ENCODE measurements at regions of chr1 and their contacts with region 1.

Region 1: DNA sequence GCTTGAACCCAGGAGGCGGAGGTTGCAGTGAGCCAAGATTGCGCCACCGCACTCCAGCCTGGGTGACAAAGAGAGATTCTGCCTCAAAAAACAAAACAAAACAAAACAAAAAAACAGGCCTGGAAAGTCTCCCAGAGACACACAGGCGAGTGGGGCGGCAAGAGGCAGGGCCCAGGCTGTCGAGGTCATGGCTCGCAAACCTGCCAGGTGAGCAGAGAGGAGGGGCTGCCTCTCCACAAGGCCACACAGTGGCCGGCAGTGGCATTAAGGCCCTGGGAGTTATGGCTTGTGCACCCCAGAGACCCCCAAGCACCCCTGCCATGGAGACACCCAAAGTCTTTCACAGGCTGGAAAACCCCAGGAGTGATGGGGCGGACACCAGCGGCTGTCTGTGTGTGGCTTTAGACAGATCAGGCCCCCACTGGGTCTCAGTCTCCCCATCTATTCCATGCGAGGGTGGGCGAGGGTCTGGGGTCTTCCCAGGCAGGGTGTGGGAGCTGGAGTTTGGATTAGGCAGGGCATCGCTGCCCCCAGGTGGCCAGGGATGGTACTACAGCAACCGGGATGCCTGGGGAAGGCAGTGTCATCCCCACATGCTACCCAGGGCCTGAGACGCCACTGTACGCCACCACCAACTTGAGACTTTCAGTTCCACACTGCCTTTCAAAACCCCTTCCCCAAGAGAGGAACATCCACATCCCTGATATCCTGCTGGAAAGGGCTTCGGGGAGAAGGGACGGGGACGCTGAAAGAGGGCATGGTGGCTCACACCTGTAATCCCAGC is 7.3 kb upstream of the CTRC start:
- DNase-seq: peak; percentile 52 to 84 (median 80)
- H3K4me3 ChIP-seq: no peak overlapping the region
- H3K27ac ChIP-seq: no peak overlapping the region
- H3K4me1 ChIP-seq: peaks cover 3% of the 10 kb centered on the region
- H3K27me3 ChIP-seq: no peaks in the 10 kb centered on the region
- CTCF ChIP-seq: peak; percentile 86 to 94 (median 93)
- EP300 ChIP-seq: no peak
- POLR2A ChIP-seq: no peak

Region 2: GRCh38 chr1:15128520-15129313 is 302.3 kb before region 1 on chr1:
- intact Hi-C with region 1: loop called in 2 of 4 experiments (anchors 10 kb)
- DNase-seq: peak; percentile 47 to 79 (median 75)
- H3K4me3 ChIP-seq: no peak overlapping the region
- H3K27ac ChIP-seq: no peak overlapping the region
- H3K4me1 ChIP-seq: no peaks in the 10 kb centered on the region
- H3K27me3 ChIP-seq: no peaks in the 10 kb centered on the region
- CTCF ChIP-seq: peak; percentile 54 to 82 (median 75)
- EP300 ChIP-seq: no peak
- POLR2A ChIP-seq: no peak

Region 3: DNA sequence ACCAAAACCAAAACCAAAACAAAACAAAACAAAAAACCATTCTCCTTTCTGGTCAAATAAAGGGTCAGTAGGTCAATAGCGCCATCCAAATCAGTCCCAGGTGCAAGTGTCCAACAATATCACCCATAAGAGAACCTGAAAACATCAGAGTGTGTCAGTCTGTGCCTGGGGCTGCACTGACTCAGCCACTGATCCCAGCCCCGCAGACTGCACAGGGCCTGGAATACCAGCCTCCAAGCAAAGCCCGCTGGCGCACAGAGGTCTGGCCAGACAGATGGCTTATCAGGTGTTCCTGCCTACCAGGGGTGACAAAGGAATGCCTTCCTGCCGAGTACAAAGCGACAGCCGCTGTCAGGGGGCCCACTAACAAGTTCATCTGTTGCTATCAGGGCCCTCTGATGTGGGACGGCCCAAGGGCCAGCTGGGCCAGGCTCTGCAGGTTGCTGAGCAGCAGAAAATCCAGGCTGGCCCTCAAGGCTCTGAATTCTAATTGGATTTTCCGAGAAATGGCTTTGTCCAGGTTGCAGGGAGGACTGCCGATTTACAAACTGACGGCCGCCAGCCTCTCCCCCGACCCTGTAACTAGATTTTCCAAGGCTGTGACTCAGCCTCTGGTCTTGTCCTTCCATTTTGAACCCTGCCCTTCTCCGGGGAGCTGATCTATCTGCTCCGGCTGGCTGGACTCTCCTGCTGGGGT is 291.2 kb before region 1 on chr1:
- intact Hi-C with region 1: loop called in 1 of 4 experiments (anchors 10 kb)
- DNase-seq: peak in 1 of 5 donors; percentile 16
- H3K4me3 ChIP-seq: no peak overlapping the region
- H3K27ac ChIP-seq: no peak overlapping the region
- H3K4me1 ChIP-seq: no peaks in the 10 kb centered on the region
- H3K27me3 ChIP-seq: no peaks in the 10 kb centered on the region
- CTCF ChIP-seq: no peak
- EP300 ChIP-seq: no peak
- POLR2A ChIP-seq: no peak

Region 4: DNA sequence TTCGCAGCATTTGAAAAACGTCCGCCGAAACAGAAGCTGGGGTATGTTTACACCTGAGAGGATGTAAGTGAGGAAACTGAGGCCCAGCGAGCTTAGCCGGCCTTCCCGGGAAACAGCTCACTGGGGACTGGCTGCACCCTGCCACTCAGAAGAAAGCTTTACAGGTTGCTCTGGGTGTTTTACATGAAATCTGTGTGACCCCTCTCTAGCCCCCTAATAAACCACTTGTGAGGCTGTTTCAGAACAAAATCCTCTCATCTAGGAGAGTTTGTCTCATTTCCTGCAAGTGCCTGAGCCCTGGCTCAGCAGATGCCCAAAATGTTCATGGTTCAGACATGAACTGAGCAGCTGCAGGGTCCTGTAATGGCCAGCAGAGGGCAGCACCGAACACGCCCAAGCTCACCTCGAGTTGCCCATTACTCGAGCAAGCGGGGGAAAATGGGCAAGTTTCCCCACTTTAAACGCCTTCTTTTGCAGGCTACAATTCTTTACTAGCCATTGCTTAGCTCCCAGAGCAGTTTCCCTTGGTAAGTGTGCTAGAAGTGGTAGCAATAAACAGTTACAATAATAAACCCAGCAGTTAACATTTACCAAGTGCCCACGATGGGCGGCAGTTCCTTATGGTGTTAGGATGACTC is 107.5 kb before region 1 on chr1:
- intact Hi-C with region 1: loop called (anchors 2 to 5 kb)
- DNase-seq: peak; percentile 70 to 87 (median 83)
- H3K4me3 ChIP-seq: no peak overlapping the region
- H3K27ac ChIP-seq: no peak overlapping the region
- H3K4me1 ChIP-seq: peaks cover 2% of the 10 kb centered on the region
- H3K27me3 ChIP-seq: no peaks in the 10 kb centered on the region
- CTCF ChIP-seq: peak; percentile 90 to 95 (median 93)
- EP300 ChIP-seq: no peak
- POLR2A ChIP-seq: peak; percentile 21

Region 5: DNA sequence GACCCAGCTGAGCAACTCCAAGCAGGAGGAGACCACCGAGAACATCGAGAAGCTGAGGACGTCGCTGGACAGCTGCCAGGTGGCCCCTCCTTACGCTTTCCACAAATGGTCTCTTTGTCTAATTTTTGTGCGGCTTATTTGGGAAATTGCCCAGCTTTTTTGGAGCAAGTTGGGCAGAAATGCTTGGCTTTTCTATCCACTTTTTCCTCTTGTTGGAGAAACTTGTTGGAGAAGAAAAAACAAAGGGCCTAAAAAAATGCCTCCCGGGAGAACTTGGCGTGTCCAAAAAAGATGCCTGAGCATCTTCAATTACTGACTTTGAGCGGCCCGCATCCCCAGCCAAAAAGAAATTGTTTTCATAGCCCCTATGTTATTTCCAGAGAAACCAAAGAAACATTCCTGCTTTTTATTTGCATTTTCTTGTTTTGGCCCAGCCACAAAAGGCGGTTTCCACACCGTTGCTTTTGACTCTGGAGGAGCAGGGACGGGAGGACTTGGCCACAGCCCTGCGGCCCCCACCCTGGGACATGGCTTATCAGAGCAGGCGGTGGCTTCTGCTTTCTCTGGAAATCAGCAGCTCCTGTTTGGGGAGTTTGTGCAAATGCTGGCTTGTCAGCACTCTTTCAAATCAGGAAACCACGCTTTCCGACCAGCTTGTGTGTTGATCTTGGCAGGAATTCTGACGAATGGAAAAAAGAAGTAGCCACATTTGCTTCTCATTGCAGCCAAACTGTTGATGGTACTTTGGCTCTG is 102.5 kb before region 1 on chr1:
- intact Hi-C with region 1: loop called (anchors 2 to 5 kb)
- DNase-seq: peak; percentile 68 to 76 (median 72)
- H3K4me3 ChIP-seq: no peak overlapping the region
- H3K27ac ChIP-seq: no peak overlapping the region
- H3K4me1 ChIP-seq: peaks cover 7% of the 10 kb centered on the region
- H3K27me3 ChIP-seq: no peaks in the 10 kb centered on the region
- CTCF ChIP-seq: no peak
- EP300 ChIP-seq: no peak
- POLR2A ChIP-seq: no peak

Region 6: GRCh38 chr1:15475752-15476314 is 44.9 kb after region 1 on chr1 and contains the start of gene CELA2B:
- intact Hi-C with region 1: no loop called
- DNase-seq: no peak
- H3K4me3 ChIP-seq: no peak within 1 kb of the TSS
- H3K27ac ChIP-seq: no peak within 1 kb of the TSS
- H3K4me1 ChIP-seq: peaks cover 1% of the 10 kb centered on the region
- H3K27me3 ChIP-seq: no peaks in the 10 kb centered on the region
- CTCF ChIP-seq: no peak
- EP300 ChIP-seq: no peak
- POLR2A ChIP-seq: no peak
- total RNA-seq, gene CELA2B: 0.33 to 0.46 (median 0.36) TPM in 3 of 7 donors, not detected in the others

Region 7: DNA sequence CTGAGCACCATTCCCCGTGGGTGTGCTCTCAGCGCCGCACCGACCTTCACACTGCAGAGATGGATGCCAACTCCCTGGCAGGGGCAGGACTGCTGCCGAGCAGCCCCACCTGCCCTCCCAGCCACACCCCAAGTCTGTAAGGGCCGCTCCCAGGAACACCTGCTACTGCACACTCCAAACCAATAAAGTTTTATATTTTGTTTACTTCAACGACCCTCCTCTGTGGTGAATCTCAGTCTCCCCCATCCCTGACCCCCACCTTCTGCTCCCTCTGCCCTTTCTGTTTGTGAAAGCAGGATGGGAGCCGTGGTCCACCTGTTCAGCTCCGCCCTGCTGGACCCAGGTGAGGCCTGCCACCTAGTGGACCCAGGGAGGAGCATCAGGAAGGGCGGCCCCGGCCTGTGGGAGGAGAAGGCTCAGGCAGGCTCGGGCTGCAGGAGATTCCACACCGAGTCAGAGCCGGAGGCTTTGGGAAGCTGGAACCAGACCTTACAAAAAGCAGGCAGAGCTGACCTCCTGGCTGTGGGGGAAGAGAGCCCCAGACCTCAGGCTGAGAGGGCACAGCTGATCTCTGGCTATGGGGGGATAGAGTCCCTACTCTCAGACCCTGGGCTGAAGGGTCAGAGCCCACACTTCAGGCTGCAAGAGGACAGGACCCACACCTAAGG is 310.3 kb after region 1 on chr1:
- intact Hi-C with region 1: loop called in 1 of 4 experiments (anchors 5 kb)
- DNase-seq: peak; percentile 82 to 90 (median 86)
- H3K4me3 ChIP-seq: no peak overlapping the region
- H3K27ac ChIP-seq: no peak overlapping the region
- H3K4me1 ChIP-seq: no peaks in the 10 kb centered on the region
- H3K27me3 ChIP-seq: no peaks in the 10 kb centered on the region
- CTCF ChIP-seq: peak; percentile 56 to 83 (median 77)
- EP300 ChIP-seq: no peak
- POLR2A ChIP-seq: peak; percentile 6